Sigmoid colon (tissue), 7 donors: ENCODE measurements at regions of chr3 and their contacts with region 1.

Region 1: DNA sequence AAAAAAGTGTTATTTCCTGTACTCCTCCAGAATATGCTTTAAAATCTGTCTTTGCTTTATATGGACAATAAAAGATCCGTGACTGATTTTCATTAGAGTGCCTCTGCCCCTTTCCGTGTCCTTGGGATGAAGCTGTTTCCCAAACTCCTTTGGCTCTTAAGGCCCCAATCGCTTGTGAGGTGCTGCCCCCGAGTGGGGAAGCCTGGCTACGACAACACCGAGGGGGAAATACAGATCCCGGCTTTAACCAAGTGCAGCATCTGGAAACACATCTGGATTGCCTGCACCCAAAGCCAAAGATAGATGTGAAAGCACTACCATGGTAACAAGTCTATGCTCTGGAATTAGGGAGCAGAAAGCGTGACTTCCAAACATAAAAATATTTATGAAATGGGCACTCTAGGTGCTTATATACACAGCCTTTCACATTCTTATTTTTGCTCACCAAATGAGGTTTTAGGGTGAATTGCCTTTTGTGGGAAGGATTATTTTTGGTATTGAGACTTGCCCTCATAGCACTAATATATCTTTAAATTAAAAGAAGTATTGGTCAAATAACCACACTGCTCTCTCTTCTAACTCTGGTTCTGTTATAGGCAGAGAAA is 40.6 kb upstream of the ADCY5 start:
- DNase-seq: peak; percentile 85
- H3K4me3 ChIP-seq: no peak overlapping the region
- H3K27ac ChIP-seq: peak overlapping the region; percentile 28 to 67 (median 64)
- H3K4me1 ChIP-seq: peaks cover 0 to 13% (median 9%) of the 10 kb centered on the region in 4 donors
- H3K27me3 ChIP-seq: no peaks in the 10 kb centered on the region
- CTCF ChIP-seq: peak; percentile 84 to 87 (median 86)
- EP300 ChIP-seq: no peak
- POLR2A ChIP-seq: no peak

Region 2: DNA sequence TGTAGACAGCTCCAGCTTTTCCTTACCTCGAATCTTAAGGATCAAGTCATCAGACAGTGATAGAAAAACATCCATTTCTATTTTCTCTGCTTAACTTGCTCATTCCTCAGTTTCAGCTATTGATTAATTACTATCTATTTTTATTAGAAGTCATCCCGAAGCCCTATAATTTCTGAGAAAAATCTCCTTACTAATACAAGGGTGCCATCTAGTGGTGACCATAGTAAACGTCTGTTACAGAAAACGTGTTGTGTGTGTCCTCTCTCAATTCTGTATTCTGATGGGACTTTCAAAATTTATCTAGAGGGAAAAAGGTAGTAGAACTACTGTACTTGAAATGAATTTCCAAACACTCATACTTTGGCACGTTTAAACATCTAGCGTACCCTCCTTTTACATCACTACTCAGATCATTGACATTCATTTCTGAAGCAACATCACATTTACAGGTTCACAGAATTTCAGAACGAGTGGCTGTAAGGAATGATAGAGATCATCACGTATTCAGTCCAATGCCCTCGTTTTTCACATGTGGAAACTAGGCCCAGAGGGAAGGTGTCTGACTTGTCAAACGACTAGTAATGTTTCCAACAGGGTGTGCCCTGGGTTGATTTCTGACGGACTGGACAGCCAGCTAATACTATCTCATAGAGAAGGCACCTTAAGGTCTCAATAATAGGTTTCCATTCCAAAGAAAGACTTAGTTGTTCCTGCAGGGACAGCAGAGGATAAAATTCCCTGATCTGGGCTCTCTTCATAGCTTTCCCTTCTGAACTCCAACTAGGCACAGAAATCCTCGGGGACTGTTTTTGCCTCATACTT is 69.7 kb after region 1 on chr3:
- intact Hi-C with region 1: loop called (anchors 2 kb)
- DNase-seq: no peak
- H3K4me3 ChIP-seq: no peak overlapping the region
- H3K27ac ChIP-seq: no peak overlapping the region
- H3K4me1 ChIP-seq: peaks cover 0 to 4% (median 2%) of the 10 kb centered on the region in 4 donors
- H3K27me3 ChIP-seq: no peaks in the 10 kb centered on the region
- CTCF ChIP-seq: peak; percentile 48 to 85 (median 64)
- EP300 ChIP-seq: no peak
- POLR2A ChIP-seq: no peak

Region 3: GRCh38 chr3:123807820-123808219 is 318.3 kb after region 1 on chr3:
- intact Hi-C with region 1: no loop called
- DNase-seq: no peak
- H3K4me3 ChIP-seq: no peak overlapping the region
- H3K27ac ChIP-seq: no peak overlapping the region
- H3K4me1 ChIP-seq: no peaks in the 10 kb centered on the region
- H3K27me3 ChIP-seq: no peaks in the 10 kb centered on the region
- CTCF ChIP-seq: no peak
- EP300 ChIP-seq: no peak
- POLR2A ChIP-seq: no peak